B cell (primary cell): ENCODE measurements at regions of chr18 and their contacts with region 1.

Region 1: GRCh38 chr18:32803568-32803967 is 30.7 kb upstream of the KLHL14 start:
- DNase-seq: peak; percentile 84
- ATAC-seq: peak; percentile 91
- H3K4me3 ChIP-seq: peak overlapping the region in 2 of 5 experiments; percentile 37 to 43
- H3K4me3 Mint-ChIP-seq: peak overlapping the region; percentile 80
- H3K27ac ChIP-seq: peak overlapping the region; percentile 88 to 91
- H3K27ac Mint-ChIP-seq: peak overlapping the region; percentile 96
- H3K4me1 ChIP-seq: peaks cover 43 to 46% of the 10 kb centered on the region in 2 donors
- H3K4me1 Mint-ChIP-seq: peaks cover 53% of the 10 kb centered on the region
- H3K27me3 ChIP-seq: no peaks in the 10 kb centered on the region
- H3K27me3 Mint-ChIP-seq: no peaks in the 10 kb centered on the region
- CTCF ChIP-seq: no peak

Region 2: GRCh38 chr18:32092422-32093101 is 711.0 kb before region 1 on chr18:
- CTCF ChIA-PET with region 1: no interaction called
- POLR2A ChIA-PET with region 1: no interaction called
- intact Hi-C with region 1: loop called (anchors 5 kb)
- DNase-seq: peak; percentile 98
- ATAC-seq: peak; percentile 90
- H3K4me3 ChIP-seq: peak overlapping the region; percentile 63 to 98 (median 90)
- H3K4me3 Mint-ChIP-seq: peak overlapping the region; percentile 93
- H3K27ac ChIP-seq: peak overlapping the region; percentile 100
- H3K27ac Mint-ChIP-seq: peak overlapping the region; percentile 98
- H3K4me1 ChIP-seq: peaks cover 35 to 40% of the 10 kb centered on the region in 2 donors
- H3K4me1 Mint-ChIP-seq: peaks cover 43% of the 10 kb centered on the region
- H3K27me3 ChIP-seq: no peaks in the 10 kb centered on the region
- H3K27me3 Mint-ChIP-seq: no peaks in the 10 kb centered on the region
- CTCF ChIP-seq: no peak

Region 3: DNA sequence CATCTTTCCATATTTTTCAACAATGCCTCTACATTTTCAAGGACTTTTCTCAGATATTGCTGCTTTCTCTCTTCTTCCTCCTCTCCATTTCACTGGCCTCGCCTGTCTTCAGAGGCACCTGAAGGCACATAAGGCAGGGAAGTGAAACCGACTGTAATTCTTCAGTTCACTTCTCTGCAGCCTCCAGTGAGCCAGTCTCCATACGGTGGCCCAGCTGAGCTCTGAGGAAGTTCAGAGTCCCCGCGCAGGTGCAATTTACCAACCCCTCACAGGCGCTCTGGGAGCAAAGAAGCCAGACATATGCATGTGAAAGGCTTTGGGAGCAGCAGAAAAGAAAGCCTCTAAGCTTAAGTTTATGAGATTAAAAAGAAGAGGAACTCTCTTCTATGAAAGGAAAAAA is 43.2 kb before region 1 on chr18:
- CTCF ChIA-PET with region 1: interaction called, 3 read pairs
- POLR2A ChIA-PET with region 1: no interaction called
- intact Hi-C with region 1: loop called (anchors 2 kb)
- DNase-seq: peak; percentile 91
- ATAC-seq: peak; percentile 99
- H3K4me3 ChIP-seq: peak overlapping the region in 2 of 5 experiments; percentile 20 to 34
- H3K4me3 Mint-ChIP-seq: peak overlapping the region; percentile 52
- H3K27ac ChIP-seq: peak overlapping the region; percentile 76 to 81
- H3K27ac Mint-ChIP-seq: peak overlapping the region; percentile 81
- H3K4me1 ChIP-seq: peaks cover 60 to 91% of the 10 kb centered on the region in 2 donors
- H3K4me1 Mint-ChIP-seq: peaks cover 84% of the 10 kb centered on the region
- H3K27me3 ChIP-seq: no peaks in the 10 kb centered on the region
- H3K27me3 Mint-ChIP-seq: no peaks in the 10 kb centered on the region
- CTCF ChIP-seq: no peak

Region 4: GRCh38 chr18:32868406-32868805 is 64.8 kb after region 1 on chr18:
- CTCF ChIA-PET with region 1: interaction called, 7 read pairs
- POLR2A ChIA-PET with region 1: interaction called, 3 read pairs
- intact Hi-C with region 1: loop called (anchors 5 kb)
- DNase-seq: peak; percentile 72
- ATAC-seq: peak; percentile 56
- H3K4me3 ChIP-seq: peak overlapping the region in 2 of 5 experiments; percentile 32 to 57
- H3K4me3 Mint-ChIP-seq: peak overlapping the region; percentile 69
- H3K27ac ChIP-seq: peak overlapping the region; percentile 88 to 90
- H3K27ac Mint-ChIP-seq: peak overlapping the region; percentile 86
- H3K4me1 ChIP-seq: peaks cover 69 to 74% of the 10 kb centered on the region in 2 donors
- H3K4me1 Mint-ChIP-seq: peaks cover 76% of the 10 kb centered on the region
- H3K27me3 ChIP-seq: no peaks in the 10 kb centered on the region
- H3K27me3 Mint-ChIP-seq: no peaks in the 10 kb centered on the region
- CTCF ChIP-seq: no peak

Region 5: GRCh38 chr18:32919799-32920198 is 116.2 kb after region 1 on chr18:
- CTCF ChIA-PET with region 1: interaction called, 7 read pairs
- POLR2A ChIA-PET with region 1: no interaction called
- intact Hi-C with region 1: loop called (anchors 2 kb)
- DNase-seq: peak; percentile 87
- ATAC-seq: peak; percentile 99
- H3K4me3 ChIP-seq: no peak overlapping the region
- H3K4me3 Mint-ChIP-seq: peak overlapping the region; percentile 49
- H3K27ac ChIP-seq: peak overlapping the region in 1 of 2 donors; percentile 24
- H3K27ac Mint-ChIP-seq: no peak overlapping the region
- H3K4me1 ChIP-seq: peaks cover 43 to 52% of the 10 kb centered on the region in 2 donors
- H3K4me1 Mint-ChIP-seq: peaks cover 44% of the 10 kb centered on the region
- H3K27me3 ChIP-seq: no peaks in the 10 kb centered on the region
- H3K27me3 Mint-ChIP-seq: no peaks in the 10 kb centered on the region
- CTCF ChIP-seq: peak; percentile 97